ENCODE measurements at regions of chr1 and their contacts with region 1.

Region 1: DNA sequence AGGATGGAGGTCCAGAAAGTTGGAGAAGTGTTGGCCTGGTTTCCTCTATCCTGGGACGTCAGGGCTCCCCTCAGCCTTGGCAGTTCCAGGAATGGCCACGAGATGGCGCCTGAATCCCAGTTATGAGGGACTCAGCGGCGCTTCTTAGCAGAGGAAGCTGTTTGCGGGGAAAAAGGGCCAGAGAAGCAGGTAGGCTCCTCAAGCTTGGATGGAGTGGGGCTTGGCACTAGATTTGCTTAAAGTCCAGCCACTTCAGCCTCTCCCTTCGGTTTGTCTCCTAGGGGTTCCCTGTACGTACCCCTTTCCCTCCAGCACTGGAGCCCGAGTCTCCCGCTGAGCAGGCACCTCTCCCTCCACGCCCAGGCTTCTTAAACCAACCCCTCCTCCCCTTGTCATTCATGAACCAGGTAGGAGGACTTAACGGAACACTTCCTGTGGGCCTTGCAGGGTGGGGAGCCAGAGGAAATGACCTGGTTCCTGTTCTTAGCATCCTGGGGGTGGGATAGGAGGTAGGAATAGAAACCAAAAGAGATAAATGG is 32.0 kb upstream of the TENT5B start:
- DNase-seq: no peak
- H3K4me3 ChIP-seq: no peak overlapping the region
- H3K27me3 ChIP-seq: no peaks in the 10 kb centered on the region
- CTCF ChIP-seq: peak; percentile 97

Region 2: GRCh38 chr1:26787706-26788514 is 256.8 kb before region 1 on chr1 and contains the start of gene PIGV:
- CTCF ChIA-PET with region 1: no interaction called
- POLR2A ChIA-PET with region 1: no interaction called
- DNase-seq: no peak
- H3K4me3 ChIP-seq: peak within 1 kb of the TSS; percentile 54
- H3K27me3 ChIP-seq: no peaks in the 10 kb centered on the region
- CTCF ChIP-seq: no peak
- polyA plus RNA-seq, gene PIGV: 25.7 and 28.0 TPM in 2 replicates

Region 3: GRCh38 chr1:26961826-26962225 is 82.9 kb before region 1 on chr1:
- CTCF ChIA-PET with region 1: interaction called, 28 read pairs
- POLR2A ChIA-PET with region 1: no interaction called
- DNase-seq: peak; percentile 72
- H3K4me3 ChIP-seq: no peak overlapping the region
- H3K27me3 ChIP-seq: peaks cover 14% of the 10 kb centered on the region
- CTCF ChIP-seq: no peak

Region 4: GRCh38 chr1:26999440-26999987 is 45.2 kb before region 1 on chr1:
- CTCF ChIA-PET with region 1: interaction called, 74 read pairs
- POLR2A ChIA-PET with region 1: no interaction called
- DNase-seq: peak; percentile 95
- H3K4me3 ChIP-seq: no peak overlapping the region
- H3K27me3 ChIP-seq: no peaks in the 10 kb centered on the region
- CTCF ChIP-seq: 0 out of 2 replicates have a peak, but pooled peaks have one; percentile 19

Region 5: DNA sequence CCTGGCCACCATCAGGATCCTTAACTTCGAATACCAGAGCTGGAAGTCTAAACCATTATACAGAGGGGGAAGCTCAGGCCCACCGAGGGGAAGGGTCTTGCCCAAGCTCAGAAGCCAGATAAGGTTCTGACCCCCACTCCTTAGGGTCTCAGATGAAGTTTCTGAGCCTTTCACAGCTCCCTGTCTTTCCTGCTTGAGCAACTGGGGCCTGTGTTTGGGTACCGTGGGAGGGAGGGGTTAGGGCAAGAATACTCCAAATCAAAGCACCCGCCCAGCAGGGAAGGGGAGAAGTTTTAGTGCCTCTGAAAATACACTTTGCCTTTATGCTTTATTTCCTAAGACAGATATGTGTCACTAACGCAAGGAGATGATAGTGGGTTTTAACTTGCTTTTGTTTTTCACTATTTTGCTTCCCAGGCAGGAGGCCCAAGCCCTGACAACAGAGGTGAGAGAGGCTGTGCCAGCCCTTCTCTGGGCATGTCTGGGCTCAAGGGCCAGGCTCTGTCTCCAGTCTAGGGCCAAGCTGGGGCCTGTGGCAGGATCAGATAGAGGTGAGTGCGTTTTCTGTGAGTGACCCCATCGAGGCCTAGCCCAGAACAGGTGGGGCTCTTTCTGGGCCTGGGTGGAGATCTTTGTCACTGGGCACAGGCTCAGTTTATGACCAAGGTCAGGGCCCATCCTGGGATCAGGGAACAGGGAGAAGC is 11.5 kb before region 1 on chr1:
- CTCF ChIA-PET with region 1: interaction called, 27 read pairs
- POLR2A ChIA-PET with region 1: no interaction called
- DNase-seq: no peak
- H3K4me3 ChIP-seq: no peak overlapping the region
- H3K27me3 ChIP-seq: no peaks in the 10 kb centered on the region
- CTCF ChIP-seq: no peak

Region 6: DNA sequence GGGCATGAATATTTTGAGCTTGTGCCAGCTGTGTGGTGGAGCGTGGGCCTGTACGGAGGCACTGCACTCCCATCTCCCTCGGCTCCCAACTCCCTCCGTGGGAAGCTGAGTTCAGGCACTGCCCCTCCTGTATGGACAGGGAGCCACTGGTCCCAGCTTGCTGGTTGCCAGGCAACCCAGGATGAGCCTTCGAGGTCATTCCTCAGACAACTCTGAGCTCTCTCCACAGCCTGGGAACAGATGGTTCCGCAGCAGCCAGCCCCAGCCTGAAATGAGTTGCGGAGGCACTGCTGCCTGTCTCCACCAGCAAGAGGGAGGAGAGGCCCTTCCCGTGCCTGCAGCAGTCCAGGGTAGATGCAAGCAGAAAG is 26.4 kb after region 1 on chr1:
- CTCF ChIA-PET with region 1: interaction called, 36 read pairs
- POLR2A ChIA-PET with region 1: interaction called, 5 read pairs
- DNase-seq: peak; percentile 31
- H3K4me3 ChIP-seq: no peak overlapping the region
- H3K27me3 ChIP-seq: no peaks in the 10 kb centered on the region; the same call in none of the 2 replicates
- CTCF ChIP-seq: no peak

Region 7: DNA sequence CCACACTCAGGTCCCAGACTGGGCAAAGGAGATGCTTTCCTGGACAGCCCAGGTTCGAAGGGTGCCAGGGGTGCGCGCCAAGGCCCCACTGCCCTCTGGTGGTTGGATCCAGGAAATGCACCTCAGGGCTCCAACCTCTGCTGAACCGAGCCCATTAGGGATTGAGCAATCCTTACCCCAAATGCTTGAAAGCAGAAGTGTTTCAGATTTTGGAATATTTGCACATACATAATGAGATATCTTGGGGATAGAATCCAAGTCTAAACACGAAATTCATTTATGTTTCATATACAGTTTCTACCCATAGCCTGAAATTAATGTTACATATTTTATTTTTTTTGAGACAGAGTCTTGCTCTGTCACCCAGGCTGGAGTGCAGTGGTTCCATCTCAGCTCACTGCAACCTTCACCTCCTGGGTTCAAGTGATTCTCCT is 52.8 kb after region 1 on chr1:
- CTCF ChIA-PET with region 1: interaction called, 551 read pairs
- POLR2A ChIA-PET with region 1: no interaction called
- DNase-seq: no peak
- H3K4me3 ChIP-seq: no peak overlapping the region
- H3K27me3 ChIP-seq: no peaks in the 10 kb centered on the region
- CTCF ChIP-seq: peak; percentile 96

Region 8: DNA sequence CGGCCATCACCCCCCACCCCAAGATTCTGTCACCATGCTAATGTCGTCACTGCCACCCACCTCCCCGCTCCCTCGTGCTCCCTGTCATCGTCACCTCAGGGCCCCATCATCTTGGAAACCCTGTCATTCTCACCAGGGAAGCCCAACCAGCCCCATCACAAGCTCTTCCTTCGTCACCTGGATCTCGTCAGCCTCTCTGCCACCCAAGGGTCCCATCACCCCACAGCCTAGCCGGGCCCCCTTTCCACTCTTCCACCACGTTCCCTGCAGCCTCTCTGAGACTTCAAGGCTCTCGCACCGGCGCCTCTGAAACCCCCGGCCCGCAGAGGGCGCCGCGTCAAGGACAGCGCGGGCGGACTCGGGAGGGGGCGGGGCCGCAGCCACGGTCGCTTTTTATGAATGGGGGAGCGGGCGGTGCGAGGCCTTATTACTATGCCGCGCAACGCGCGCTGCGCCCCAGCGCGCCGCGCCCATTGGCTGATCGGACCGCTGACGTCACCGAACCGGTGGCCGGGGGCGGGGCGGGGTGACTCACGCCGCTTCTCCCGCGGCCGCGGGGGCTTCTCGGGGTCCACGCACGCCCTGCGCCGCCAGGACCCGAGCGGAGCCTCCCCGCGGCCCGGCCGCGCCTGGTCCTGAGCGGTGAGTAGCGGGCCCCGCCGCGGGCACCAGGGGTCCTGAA is 347.6 kb after region 1 on chr1 and contains the start of gene GPR3:
- CTCF ChIA-PET with region 1: interaction called, 11 read pairs
- POLR2A ChIA-PET with region 1: no interaction called
- DNase-seq: no peak
- H3K4me3 ChIP-seq: peak within 1 kb of the TSS; percentile 70
- H3K27me3 ChIP-seq: no peaks in the 10 kb centered on the region
- CTCF ChIP-seq: peak; percentile 77
- polyA plus RNA-seq, gene GPR3: 1.0 and 1.8 TPM in 2 replicates